ENCODE measurements at regions of chr12 and their contacts with region 1.

Region 1: GRCh38 chr12:122486805-122487426 is 13.8 kb downstream of the ZCCHC8 start:
- DNase-seq: no peak
- H3K4me3 ChIP-seq: no peak overlapping the region
- H3K27ac ChIP-seq: no peak overlapping the region
- H3K4me1 ChIP-seq: no peaks in the 10 kb centered on the region
- CTCF ChIP-seq: no peak

Region 2: DNA sequence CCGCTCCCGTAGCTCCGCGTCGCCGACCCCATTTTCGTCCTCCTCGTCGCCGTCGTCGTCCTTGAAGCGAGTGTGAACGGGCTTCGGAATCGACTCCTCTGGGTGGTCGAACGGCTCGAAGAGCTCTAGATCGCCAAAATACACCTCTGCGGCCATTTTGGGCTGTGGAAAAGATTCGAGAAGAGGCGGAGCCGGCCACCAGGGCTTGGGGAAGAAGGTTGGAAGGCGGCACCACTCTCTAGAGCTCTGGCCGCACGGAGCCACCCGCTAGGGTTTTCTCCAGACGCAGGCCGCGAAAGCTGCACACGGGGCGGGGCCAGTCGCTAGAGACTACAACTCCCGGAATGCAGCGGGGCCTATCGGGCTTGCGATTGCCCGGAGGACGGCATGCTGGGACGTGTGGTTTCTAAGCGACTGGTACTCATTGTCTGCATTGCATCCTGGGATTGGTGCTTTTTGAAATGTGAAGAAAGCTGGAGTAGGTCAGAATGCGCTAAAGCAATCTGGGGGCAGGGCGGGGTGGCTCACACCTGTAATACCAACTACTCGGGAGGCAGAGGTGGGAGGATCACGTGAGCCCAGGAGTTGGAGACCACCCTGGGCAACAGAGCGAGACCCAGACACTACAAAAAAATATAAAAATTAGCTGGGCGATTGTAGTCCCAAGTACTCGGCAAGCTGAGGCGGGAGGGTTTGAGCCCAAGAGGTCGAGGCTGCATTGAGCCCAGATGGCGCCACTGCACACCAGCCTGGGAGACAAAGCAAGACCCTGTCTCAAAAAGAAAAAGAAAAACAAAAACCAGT is 14.0 kb after region 1 on chr12 and contains the start of gene ZCCHC8:
- CTCF ChIA-PET with region 1: no interaction called
- POLR2A ChIA-PET with region 1: interaction called, 11 read pairs
- intact Hi-C with region 1: no loop called
- DNase-seq: peak; percentile 99
- H3K4me3 ChIP-seq: peak within 1 kb of the TSS; percentile 81
- H3K27ac ChIP-seq: peak within 1 kb of the TSS; percentile 87
- H3K4me1 ChIP-seq: peaks cover 48% of the 10 kb centered on the region
- CTCF ChIP-seq: peak; percentile 55
- total RNA-seq, gene ZCCHC8: 46.9 and 48.7 TPM in 2 replicates

Measured in OCI-LY7 (cell line).